Uterus (tissue), 4 donors: ENCODE measurements at regions of chr5 and their contacts with region 1.

Region 1: DNA sequence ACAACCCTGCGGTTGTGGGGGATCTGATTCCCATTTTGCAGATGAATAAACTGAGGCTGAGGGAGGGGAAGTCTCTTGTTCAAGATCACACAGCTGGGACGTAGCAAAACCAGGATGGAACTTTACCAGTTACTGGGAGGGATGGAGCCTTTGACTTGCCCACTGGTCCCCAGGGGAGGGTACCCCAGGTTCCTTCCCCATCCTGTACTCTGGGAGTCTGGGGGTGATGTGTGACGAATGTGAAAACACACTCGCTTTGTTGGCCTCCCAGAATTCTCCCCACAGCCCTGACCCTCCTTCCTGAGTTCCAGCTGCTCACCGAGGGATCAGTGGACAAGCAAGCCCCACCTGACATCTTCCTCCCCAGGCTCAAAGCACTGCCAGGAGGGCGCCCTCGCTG is 135.1 kb downstream of the NSG2 start:
- DNase-seq: no peak
- H3K4me3 ChIP-seq: no peak overlapping the region
- H3K27ac ChIP-seq: no peak overlapping the region
- H3K4me1 ChIP-seq: no peaks in the 10 kb centered on the region
- H3K27me3 ChIP-seq: no peaks in the 10 kb centered on the region
- CTCF ChIP-seq: no peak
- POLR2A ChIP-seq: no peak

Region 2: GRCh38 chr5:172213126-172213525 is 1967.5 kb before region 1 on chr5:
- intact Hi-C with region 1: loop called (anchors 5 kb)
- DNase-seq: no peak
- H3K4me3 ChIP-seq: no peak overlapping the region
- H3K27ac ChIP-seq: no peak overlapping the region
- H3K4me1 ChIP-seq: no peaks in the 10 kb centered on the region
- H3K27me3 ChIP-seq: no peaks in the 10 kb centered on the region
- CTCF ChIP-seq: no peak
- POLR2A ChIP-seq: no peak

Region 3: GRCh38 chr5:175107850-175108249 is 927.2 kb after region 1 on chr5:
- intact Hi-C with region 1: no loop called
- DNase-seq: no peak
- H3K4me3 ChIP-seq: no peak overlapping the region
- H3K27ac ChIP-seq: no peak overlapping the region
- H3K4me1 ChIP-seq: no peaks in the 10 kb centered on the region
- H3K27me3 ChIP-seq: no peaks in the 10 kb centered on the region
- CTCF ChIP-seq: no peak
- POLR2A ChIP-seq: no peak